Breast epithelium (tissue), 4 donors: ENCODE measurements at regions of chr3 and their contacts with region 1.

Region 1: GRCh38 chr3:160801386-160802118 is 45.5 kb downstream of the PPM1L start:
- DNase-seq: no peak
- H3K4me3 ChIP-seq: peak overlapping the region in 1 of 3 donors; percentile 16
- H3K27ac ChIP-seq: peak overlapping the region; percentile 16 to 50
- H3K4me1 ChIP-seq: no peaks in the 10 kb centered on the region
- H3K27me3 ChIP-seq: no peaks in the 10 kb centered on the region
- CTCF ChIP-seq: no peak
- POLR2A ChIP-seq: no peak

Region 2: GRCh38 chr3:160748231-160748630 is 53.3 kb before region 1 on chr3:
- intact Hi-C with region 1: no loop called
- DNase-seq: no peak
- H3K4me3 ChIP-seq: no peak overlapping the region
- H3K27ac ChIP-seq: no peak overlapping the region
- H3K4me1 ChIP-seq: no peaks in the 10 kb centered on the region
- H3K27me3 ChIP-seq: no peaks in the 10 kb centered on the region
- CTCF ChIP-seq: no peak
- POLR2A ChIP-seq: no peak

Region 3: DNA sequence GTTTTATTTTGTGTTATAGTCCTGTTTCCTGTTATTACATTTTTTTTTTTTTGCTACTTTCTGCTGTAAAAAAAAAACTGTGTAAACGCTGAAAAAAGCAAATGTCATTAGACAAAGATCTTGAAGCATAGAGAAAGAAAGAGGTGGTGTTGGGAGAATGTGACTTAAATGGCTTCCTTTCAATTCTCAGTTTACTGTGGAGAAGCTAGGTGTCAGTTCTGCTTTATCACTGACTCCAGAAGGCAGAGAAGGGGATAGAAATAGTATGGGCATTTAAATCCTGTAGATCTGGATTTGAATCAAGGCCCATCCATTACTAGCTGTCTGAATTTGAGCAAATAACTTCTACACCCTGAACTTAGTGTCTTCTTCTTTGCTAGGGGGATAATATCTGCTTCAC is 22.5 kb before region 1 on chr3:
- intact Hi-C with region 1: loop called (anchors 2 kb)
- DNase-seq: no peak
- H3K4me3 ChIP-seq: no peak overlapping the region
- H3K27ac ChIP-seq: no peak overlapping the region
- H3K4me1 ChIP-seq: no peaks in the 10 kb centered on the region
- H3K27me3 ChIP-seq: no peaks in the 10 kb centered on the region
- CTCF ChIP-seq: no peak
- POLR2A ChIP-seq: no peak